ENCODE measurements at regions of chr13 and their contacts with region 1.

Region 1: GRCh38 chr13:20197361-20197834 is 4.7 kb upstream of the GJB2 start:
- DNase-seq: peak; percentile 64
- ATAC-seq: peak; percentile 54
- H3K4me3 ChIP-seq: peak overlapping the region; percentile 17 to 22; a peak in 2 of 4 replicates
- H3K27ac ChIP-seq: no peak overlapping the region
- H3K4me1 ChIP-seq: peaks cover 0 to 16% of the 10 kb centered on the region in 2 experiments; a peak in 2 of 4 replicates
- H3K27me3 ChIP-seq: peaks cover 10% of the 10 kb centered on the region; the same call in 1 of the 2 replicates
- CTCF ChIP-seq: peak; percentile 71 to 87 (median 79); a peak in 5 of 6 replicates
- POLR2A ChIP-seq: no peak
- RAD21 ChIP-seq: peak; percentile 76

Region 2: GRCh38 chr13:20182231-20182846 is 15.1 kb before region 1 on chr13:
- CTCF ChIA-PET with region 1: interaction called, 12 read pairs
- POLR2A ChIA-PET with region 1: no interaction called
- RAD21 ChIA-PET with region 1: interaction called in 1 of 2 experiments, 3 read pairs
- intact Hi-C with region 1: no loop called
- DNase-seq: peak; percentile 57
- ATAC-seq: peak; percentile 99
- H3K4me3 ChIP-seq: no peak overlapping the region
- H3K27ac ChIP-seq: no peak overlapping the region
- H3K4me1 ChIP-seq: peaks cover 0 to 3% of the 10 kb centered on the region in 2 experiments; a peak in 1 of 4 replicates
- H3K27me3 ChIP-seq: no peaks in the 10 kb centered on the region
- CTCF ChIP-seq: peak; percentile 65 to 83 (median 79); a peak in 5 of 6 replicates
- POLR2A ChIP-seq: no peak
- RAD21 ChIP-seq: peak; percentile 80

Region 3: DNA sequence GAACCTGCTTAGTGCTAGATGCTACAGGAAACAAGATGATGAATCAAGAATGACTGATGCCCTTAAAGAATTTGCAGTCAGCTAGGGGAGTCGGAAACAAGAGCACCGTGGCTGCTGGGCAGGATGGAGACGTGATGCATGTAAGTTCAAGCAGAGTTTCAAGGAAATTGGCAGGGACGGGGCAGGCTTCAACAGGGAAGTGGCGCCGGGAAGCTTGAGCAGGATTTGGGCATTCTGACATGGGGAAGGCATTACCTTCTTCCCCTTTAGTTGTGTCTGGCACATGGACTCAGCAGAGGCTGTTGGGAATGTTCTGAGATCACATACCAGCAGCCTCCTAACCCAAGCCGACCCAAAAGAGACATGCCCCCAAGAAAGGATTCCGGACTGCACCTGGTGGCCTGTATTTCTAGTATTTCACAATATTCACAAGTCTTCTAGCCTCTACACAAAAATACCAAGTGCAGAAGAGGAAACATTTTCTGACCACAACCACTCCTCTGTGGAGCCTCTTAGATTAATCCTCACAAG is 190.1 kb after region 1 on chr13:
- CTCF ChIA-PET with region 1: no interaction called
- POLR2A ChIA-PET with region 1: no interaction called
- RAD21 ChIA-PET with region 1: no interaction called
- intact Hi-C with region 1: no loop called
- DNase-seq: no peak
- ATAC-seq: no peak
- H3K4me3 ChIP-seq: no peak overlapping the region
- H3K27ac ChIP-seq: no peak overlapping the region
- H3K4me1 ChIP-seq: peaks cover 2 to 5% of the 10 kb centered on the region in 2 experiments; a peak in 2 of 4 replicates
- H3K27me3 ChIP-seq: no peaks in the 10 kb centered on the region
- CTCF ChIP-seq: no peak
- POLR2A ChIP-seq: no peak
- RAD21 ChIP-seq: no peak

Region 4: GRCh38 chr13:20425819-20426219 is 228.4 kb after region 1 on chr13:
- CTCF ChIA-PET with region 1: no interaction called
- POLR2A ChIA-PET with region 1: no interaction called
- RAD21 ChIA-PET with region 1: no interaction called
- intact Hi-C with region 1: loop called (anchors 10 kb)
- DNase-seq: no peak
- ATAC-seq: no peak
- H3K4me3 ChIP-seq: no peak overlapping the region
- H3K27ac ChIP-seq: no peak overlapping the region
- H3K4me1 ChIP-seq: peaks cover 7 to 11% of the 10 kb centered on the region in 2 experiments
- H3K27me3 ChIP-seq: no peaks in the 10 kb centered on the region
- CTCF ChIP-seq: no peak
- POLR2A ChIP-seq: no peak
- RAD21 ChIP-seq: no peak

Region 5: GRCh38 chr13:20489185-20489820 is 291.9 kb after region 1 on chr13:
- CTCF ChIA-PET with region 1: interaction called, 38 read pairs
- POLR2A ChIA-PET with region 1: no interaction called
- RAD21 ChIA-PET with region 1: interaction called, 5 to 6 read pairs
- intact Hi-C with region 1: loop called (anchors 1 kb)
- DNase-seq: peak; percentile 49
- ATAC-seq: peak; percentile 96
- H3K4me3 ChIP-seq: no peak overlapping the region
- H3K27ac ChIP-seq: no peak overlapping the region
- H3K4me1 ChIP-seq: no peaks in the 10 kb centered on the region
- H3K27me3 ChIP-seq: no peaks in the 10 kb centered on the region
- CTCF ChIP-seq: peak; percentile 59 to 86 (median 67)
- POLR2A ChIP-seq: no peak
- RAD21 ChIP-seq: peak; percentile 92

Region 6: DNA sequence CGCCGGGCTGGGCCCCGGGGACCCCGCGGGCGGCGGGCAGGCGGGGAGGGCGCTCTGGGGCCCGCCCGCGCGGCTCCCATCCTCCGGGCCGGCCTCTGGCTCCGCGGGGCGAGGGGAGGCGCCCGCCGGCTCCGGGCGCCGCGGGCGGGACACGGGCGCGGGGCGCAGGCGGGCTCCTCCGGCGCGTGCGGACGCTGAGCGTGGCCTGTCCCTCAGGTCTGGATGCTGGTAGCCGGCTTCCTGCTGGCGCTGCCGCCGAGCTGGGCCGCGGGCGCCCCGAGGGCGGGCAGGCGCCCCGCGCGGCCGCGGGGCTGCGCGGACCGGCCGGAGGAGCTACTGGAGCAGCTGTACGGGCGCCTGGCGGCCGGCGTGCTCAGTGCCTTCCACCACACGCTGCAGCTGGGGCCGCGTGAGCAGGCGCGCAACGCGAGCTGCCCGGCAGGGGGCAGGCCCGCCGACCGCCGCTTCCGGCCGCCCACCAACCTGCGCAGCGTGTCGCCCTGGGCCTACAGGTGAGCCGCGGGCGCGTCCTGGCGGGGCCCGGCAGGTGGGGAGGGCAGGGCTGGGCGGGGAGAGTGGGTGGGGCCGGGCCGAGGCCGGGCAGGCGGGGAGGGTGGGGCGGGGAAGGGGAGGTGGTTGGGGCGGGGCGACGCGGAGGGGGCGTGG is 506.5 kb after region 1 on chr13:
- CTCF ChIA-PET with region 1: no interaction called
- POLR2A ChIA-PET with region 1: no interaction called
- RAD21 ChIA-PET with region 1: no interaction called
- intact Hi-C with region 1: loop called (anchors 10 kb)
- DNase-seq: peak; percentile 66
- ATAC-seq: peak; percentile 94
- H3K4me3 ChIP-seq: peak overlapping the region in 1 of 2 experiments; percentile 20; a peak in 3 of 4 replicates
- H3K27ac ChIP-seq: peak overlapping the region; percentile 66; the same call in 1 of the 2 replicates
- H3K4me1 ChIP-seq: peaks cover 3 to 19% of the 10 kb centered on the region in 2 experiments; a peak in 3 of 4 replicates
- H3K27me3 ChIP-seq: no peaks in the 10 kb centered on the region
- CTCF ChIP-seq: peak in 2 of 3 experiments; percentile 36 to 49; a peak in 4 of 6 replicates
- POLR2A ChIP-seq: no peak
- RAD21 ChIP-seq: 0 out of 2 replicates have a peak, but pooled peaks have one; percentile 5

Region 7: DNA sequence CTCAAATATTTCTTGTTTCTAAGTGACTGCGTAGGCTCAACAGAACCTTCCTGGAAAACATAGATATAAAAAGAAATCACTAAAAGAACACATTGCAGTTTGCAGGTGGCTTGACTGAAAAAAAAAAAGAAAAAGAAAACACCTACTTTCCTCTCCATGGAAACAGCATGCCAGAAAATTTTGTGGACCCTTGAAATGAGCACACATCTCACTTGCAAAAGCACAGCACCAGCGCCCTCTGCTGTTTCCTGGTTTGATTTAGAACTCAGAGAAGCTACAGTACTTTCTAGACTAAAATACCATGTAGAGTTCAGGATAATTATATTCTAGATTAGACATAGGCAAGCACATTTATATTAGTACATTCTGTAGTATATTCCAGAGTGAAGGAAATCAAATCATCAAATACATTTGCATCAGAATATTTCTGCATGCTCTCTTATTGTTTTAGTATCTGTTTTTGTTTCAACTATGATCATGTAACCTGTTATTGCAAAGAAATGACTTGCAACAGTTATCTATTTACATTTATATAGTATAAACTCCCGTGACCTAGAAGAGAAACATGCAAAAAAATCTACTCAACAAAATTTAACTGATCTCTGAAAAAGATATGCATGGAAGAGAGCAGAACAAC is 727.5 kb after region 1 on chr13:
- CTCF ChIA-PET with region 1: interaction called, 7 read pairs
- POLR2A ChIA-PET with region 1: no interaction called
- RAD21 ChIA-PET with region 1: no interaction called
- intact Hi-C with region 1: loop called (anchors 5 kb)
- DNase-seq: peak; percentile 70
- ATAC-seq: peak; percentile 81
- H3K4me3 ChIP-seq: no peak overlapping the region
- H3K27ac ChIP-seq: no peak overlapping the region
- H3K4me1 ChIP-seq: no peaks in the 10 kb centered on the region
- H3K27me3 ChIP-seq: no peaks in the 10 kb centered on the region
- CTCF ChIP-seq: peak; percentile 77 to 92 (median 83)
- POLR2A ChIP-seq: no peak
- RAD21 ChIP-seq: peak; percentile 80